Adrenal gland (tissue), 19 donors: ENCODE measurements at regions of chr12 and their contacts with region 1.

Region 1: GRCh38 chr12:113980537-113981337 is 14.6 kb upstream of the RBM19 start:
- DNase-seq: peak in 6 of 7 donors; percentile 41 to 56 (median 49)
- H3K4me3 ChIP-seq: no peak overlapping the region
- H3K27ac ChIP-seq: no peak overlapping the region
- H3K4me1 ChIP-seq: no peaks in the 10 kb centered on the region
- H3K27me3 ChIP-seq: peaks cover 23% of the 10 kb centered on the region
- CTCF ChIP-seq: peak; percentile 86 to 98 (median 96)
- POLR2A ChIP-seq: no peak

Region 2: DNA sequence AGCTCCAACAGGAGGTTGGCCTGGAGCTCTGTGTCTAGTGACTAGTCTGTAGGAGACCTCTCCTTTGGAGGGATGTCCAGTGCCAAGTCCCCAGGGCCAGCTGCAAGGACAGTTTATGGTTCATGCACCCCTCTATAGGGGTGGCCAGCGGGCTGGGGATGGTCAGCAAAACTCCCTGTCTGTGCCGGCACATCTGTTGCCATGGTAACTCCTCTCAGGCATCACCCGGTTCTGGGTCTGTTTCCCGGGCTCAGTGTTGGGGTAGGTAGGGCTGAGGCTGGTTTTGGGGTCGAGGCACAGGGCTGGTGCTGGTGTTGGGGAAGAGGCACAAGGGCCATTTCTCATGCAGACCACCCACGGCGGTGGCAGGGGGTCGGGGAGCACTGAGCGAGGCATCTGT is 211.4 kb before region 1 on chr12:
- intact Hi-C with region 1: no loop called
- DNase-seq: no peak
- H3K4me3 ChIP-seq: no peak overlapping the region
- H3K27ac ChIP-seq: no peak overlapping the region
- H3K4me1 ChIP-seq: no peaks in the 10 kb centered on the region
- H3K27me3 ChIP-seq: peaks cover 14% of the 10 kb centered on the region
- CTCF ChIP-seq: no peak
- POLR2A ChIP-seq: no peak

Region 3: GRCh38 chr12:114508529-114509129 is 527.9 kb after region 1 on chr12:
- intact Hi-C with region 1: loop called (anchors 5 to 10 kb)
- DNase-seq: peak; percentile 58 to 91 (median 75)
- H3K4me3 ChIP-seq: no peak overlapping the region
- H3K27ac ChIP-seq: no peak overlapping the region
- H3K4me1 ChIP-seq: no peaks in the 10 kb centered on the region
- H3K27me3 ChIP-seq: peaks cover 6% of the 10 kb centered on the region
- CTCF ChIP-seq: peak; percentile 63 to 82 (median 72)
- POLR2A ChIP-seq: no peak

Region 4: GRCh38 chr12:114636723-114637483 is 656.2 kb after region 1 on chr12:
- intact Hi-C with region 1: loop called in 1 of 2 experiments (anchors 5 kb)
- DNase-seq: no peak
- H3K4me3 ChIP-seq: no peak overlapping the region
- H3K27ac ChIP-seq: no peak overlapping the region
- H3K4me1 ChIP-seq: no peaks in the 10 kb centered on the region
- H3K27me3 ChIP-seq: no peaks in the 10 kb centered on the region
- CTCF ChIP-seq: peak; percentile 9 to 35 (median 28)
- POLR2A ChIP-seq: no peak